Activated T-helper 1 cell treated with anti-CD3 and anti-CD28 coated beads, Interleukin-12 subunit alpha, Interleukin-12 subunit beta, Interleukin-2, Interleukin-4 antibody, amounts not matched to agents 30 ng/mL and 10 ng/mL and 1 ng/mL, durations not matched to agents 14 hours and 24 hours and 36 hours (primary cell): ENCODE measurements at regions of chr4 and their contacts with region 1.

Region 1: GRCh38 chr4:2536193-2537010 is at the start of gene FAM193A:
- DNase-seq: peak; percentile 99
- H3K4me3 Mint-ChIP-seq: peak within 1 kb of the TSS; percentile 92
- H3K27ac Mint-ChIP-seq: peak within 1 kb of the TSS; percentile 97
- H3K4me1 Mint-ChIP-seq: peaks cover 11% of the 10 kb centered on the region
- H3K27me3 Mint-ChIP-seq: peaks cover 4% of the 10 kb centered on the region
- total RNA-seq, gene FAM193A: 30.4 and 32.2 TPM in 2 replicates

Region 2: GRCh38 chr4:1856042-1856788 is 680.2 kb before region 1 on chr4 and contains the start of gene LETM1:
- intact Hi-C with region 1: loop called (anchors 1 kb)
- DNase-seq: peak; percentile 95
- H3K4me3 Mint-ChIP-seq: peak within 1 kb of the TSS; percentile 87
- H3K27ac Mint-ChIP-seq: peak within 1 kb of the TSS; percentile 68
- H3K4me1 Mint-ChIP-seq: peaks cover 34% of the 10 kb centered on the region
- H3K27me3 Mint-ChIP-seq: no peaks in the 10 kb centered on the region
- total RNA-seq, gene LETM1: 93.9 and 101 TPM in 2 replicates

Region 3: GRCh38 chr4:2262143-2262943 is 274.1 kb before region 1 on chr4:
- intact Hi-C with region 1: loop called (anchors 1 kb)
- DNase-seq: peak; percentile 98
- H3K4me3 Mint-ChIP-seq: peak overlapping the region; percentile 72
- H3K27ac Mint-ChIP-seq: peak overlapping the region; percentile 67
- H3K4me1 Mint-ChIP-seq: no peaks in the 10 kb centered on the region
- H3K27me3 Mint-ChIP-seq: no peaks in the 10 kb centered on the region

Region 4: DNA sequence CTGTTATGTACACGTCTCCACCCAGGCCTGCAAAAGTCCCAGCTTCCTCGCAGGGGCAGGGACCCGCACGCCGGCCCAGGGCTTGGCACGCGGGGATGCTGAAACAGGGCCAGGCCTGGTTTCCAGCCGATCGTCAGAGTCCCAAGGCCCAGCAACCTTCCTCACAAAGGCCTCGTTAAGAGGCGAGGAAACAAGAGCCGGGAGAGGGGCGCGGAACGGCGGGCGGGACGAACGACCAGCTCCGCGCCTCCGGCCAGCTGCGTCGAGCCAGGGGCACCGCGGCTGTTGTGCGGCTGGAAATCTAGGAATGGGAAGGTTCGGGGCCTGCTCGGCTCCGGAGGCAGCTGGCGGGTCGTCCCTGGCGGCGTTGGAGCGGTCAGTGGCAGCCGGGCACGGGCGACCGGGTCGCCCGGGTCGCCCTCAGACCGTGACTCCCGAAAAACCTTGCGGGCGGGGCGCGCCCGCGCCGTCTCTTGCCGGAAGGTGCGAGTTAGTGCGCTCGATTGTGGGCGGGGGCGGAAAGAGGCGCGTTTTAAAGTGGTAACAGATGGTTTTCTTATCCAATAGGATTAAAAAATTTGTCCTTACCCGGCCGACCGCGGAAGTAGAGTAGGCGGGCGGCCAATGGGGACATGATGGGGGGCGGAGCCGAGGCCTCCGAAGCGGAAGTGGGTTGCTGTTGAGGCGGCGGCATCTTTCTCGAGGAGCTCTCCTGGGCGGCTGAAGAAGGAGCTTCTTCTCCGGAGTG is 67.8 kb before region 1 on chr4 and contains the start of gene RNF4:
- intact Hi-C with region 1: loop called (anchors 1 kb)
- DNase-seq: peak; percentile 94
- H3K4me3 Mint-ChIP-seq: peak within 1 kb of the TSS; percentile 95
- H3K27ac Mint-ChIP-seq: peak within 1 kb of the TSS; percentile 96
- H3K4me1 Mint-ChIP-seq: peaks cover 29% of the 10 kb centered on the region
- H3K27me3 Mint-ChIP-seq: peaks cover 1% of the 10 kb centered on the region
- total RNA-seq, gene RNF4: 93.7 and 112 TPM in 2 replicates

Region 5: DNA sequence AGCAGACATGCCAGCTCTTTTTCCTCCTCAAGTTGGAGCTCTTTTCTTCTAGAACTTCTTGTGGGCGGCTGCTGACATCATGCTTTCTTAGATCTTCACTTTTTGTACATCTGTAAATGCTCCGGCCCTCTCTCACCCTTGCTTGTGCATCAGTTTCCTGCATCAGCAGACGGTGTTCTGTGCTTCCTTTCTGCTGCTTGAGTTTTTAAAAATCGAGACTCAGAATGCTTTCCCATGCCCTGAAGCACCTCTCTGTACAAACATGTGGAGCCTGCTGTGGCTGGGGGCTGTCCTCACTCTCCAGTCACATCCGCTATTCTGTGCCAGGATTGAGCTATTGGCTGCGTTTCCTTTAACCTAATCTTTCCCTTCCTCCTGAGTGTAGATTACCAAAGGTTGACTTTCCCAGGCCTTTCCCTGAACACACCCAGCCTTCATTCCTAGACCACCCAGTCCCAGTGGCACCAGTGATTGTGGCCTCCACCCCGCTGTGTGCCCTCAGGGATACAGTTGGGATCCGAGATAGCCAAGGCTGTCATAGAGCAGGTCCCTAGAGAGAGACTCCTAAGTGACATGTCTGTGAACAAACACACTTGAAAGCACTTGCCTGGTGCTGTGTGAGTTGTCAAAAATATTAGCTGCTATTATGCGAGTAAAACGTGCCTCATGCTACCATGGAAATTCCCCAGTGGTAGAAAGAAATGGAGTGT is 177.8 kb after region 1 on chr4:
- intact Hi-C with region 1: loop called (anchors 5 kb)
- DNase-seq: peak; percentile 38
- H3K4me3 Mint-ChIP-seq: peak overlapping the region; percentile 35
- H3K27ac Mint-ChIP-seq: peak overlapping the region; percentile 84
- H3K4me1 Mint-ChIP-seq: peaks cover 33% of the 10 kb centered on the region
- H3K27me3 Mint-ChIP-seq: no peaks in the 10 kb centered on the region

Region 6: DNA sequence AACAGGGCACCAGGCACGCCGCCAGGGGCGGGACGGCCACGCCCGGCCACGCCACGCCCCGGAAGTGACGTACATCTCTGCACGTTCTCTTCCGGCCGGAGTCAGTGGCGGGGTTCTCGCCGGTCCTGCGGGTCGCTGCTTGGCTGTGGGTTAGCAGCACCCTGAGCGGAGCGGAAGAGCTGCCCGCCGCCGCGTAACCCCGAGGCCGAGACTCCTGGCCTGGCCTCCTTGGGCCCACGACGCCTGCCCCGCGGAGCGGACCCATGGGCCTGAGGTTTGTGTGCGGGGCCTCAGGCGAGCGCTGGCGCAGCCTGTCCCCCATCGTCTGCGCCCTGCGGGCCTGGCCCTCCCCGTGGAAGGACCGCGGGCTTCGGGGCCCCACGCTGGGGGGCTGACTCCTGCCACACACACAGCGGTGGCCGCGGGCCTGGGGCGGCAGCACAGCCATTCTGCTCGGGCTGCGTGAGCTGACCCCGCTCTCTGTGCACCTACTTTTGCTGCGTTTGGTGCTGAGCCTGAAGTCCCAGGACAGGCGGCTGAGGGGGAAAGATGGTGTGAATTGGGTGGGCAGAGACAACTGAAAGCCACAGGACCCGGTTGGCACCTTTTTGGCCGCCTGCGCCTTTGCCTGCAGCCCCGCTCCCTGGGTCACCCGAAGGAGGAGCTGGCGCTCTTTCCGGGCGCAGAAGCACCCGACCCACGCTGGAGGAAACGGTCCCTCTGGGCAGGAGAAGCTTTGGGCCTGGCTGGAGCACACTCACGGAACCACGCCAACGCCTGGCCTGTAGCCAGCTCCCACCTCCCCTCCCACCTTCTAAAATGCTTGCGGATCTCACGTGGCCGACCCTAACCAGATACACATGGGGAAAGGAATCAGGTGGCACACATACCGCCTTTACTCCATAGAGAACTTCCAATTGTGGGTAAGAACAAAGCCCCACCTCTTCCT is 398.7 kb after region 1 on chr4:
- intact Hi-C with region 1: loop called (anchors 1 kb)
- DNase-seq: peak; percentile 95
- H3K4me3 Mint-ChIP-seq: peak overlapping the region; percentile 94
- H3K27ac Mint-ChIP-seq: peak overlapping the region; percentile 87
- H3K4me1 Mint-ChIP-seq: peaks cover 49% of the 10 kb centered on the region
- H3K27me3 Mint-ChIP-seq: no peaks in the 10 kb centered on the region